HCT116 (cell line): ENCODE measurements at regions of chr2 and their contacts with region 1.

Region 1: DNA sequence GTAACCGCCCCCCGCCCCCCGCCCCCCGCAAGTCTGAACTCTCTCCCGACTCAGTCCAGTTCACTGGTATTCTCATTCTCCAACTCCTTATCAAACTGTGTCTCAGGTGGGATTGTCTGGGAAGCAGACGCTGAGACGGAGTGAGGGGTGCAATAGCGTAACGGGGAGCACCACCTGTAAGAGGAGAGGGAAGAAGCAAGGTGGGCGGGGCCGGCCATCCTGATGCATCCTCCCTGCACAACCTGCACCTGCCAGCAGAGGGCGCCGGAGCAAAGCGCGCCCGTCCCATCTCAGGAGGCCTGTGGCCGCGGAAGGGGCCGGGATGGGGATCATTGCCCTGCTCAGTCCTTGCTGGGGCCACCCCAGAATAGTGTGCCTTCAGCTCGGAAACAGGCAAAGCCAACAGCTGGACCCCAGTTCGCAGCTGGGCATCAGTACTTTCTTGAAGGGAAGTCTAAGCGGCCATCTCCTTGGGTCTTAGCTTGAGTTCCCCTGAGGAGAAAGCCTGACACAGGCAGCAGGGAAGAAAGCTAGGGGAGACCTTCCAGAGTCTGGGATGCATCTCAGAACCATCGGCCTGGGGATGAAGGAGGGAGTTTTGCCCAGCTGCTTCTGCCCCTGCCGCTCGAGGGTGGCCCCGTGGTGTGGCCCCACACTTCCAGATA is 208.0 kb downstream of the TFCP2L1 start:
- DNase-seq: peak; percentile 42
- ATAC-seq: peak; percentile 66
- H3K4me3 ChIP-seq: 0 out of 4 replicates have a peak overlapping the region, but pooled peaks of 1 of the 2 experiments have one; percentile 5
- H3K27ac ChIP-seq: no peak overlapping the region
- H3K4me1 ChIP-seq: peaks cover 5 to 40% of the 10 kb centered on the region in 2 experiments; a peak in 3 of 4 replicates
- H3K27me3 ChIP-seq: no peaks in the 10 kb centered on the region
- CTCF ChIP-seq: peak; percentile 66 to 98 (median 97); a peak in 5 of 6 replicates
- POLR2A ChIP-seq: no peak
- RAD21 ChIP-seq: peak; percentile 44

Region 2: GRCh38 chr2:120686511-120687168 is 390.4 kb before region 1 on chr2:
- CTCF ChIA-PET with region 1: interaction called, 6 read pairs
- POLR2A ChIA-PET with region 1: interaction called, 24 read pairs
- RAD21 ChIA-PET with region 1: no interaction called
- intact Hi-C with region 1: no loop called
- DNase-seq: no peak
- ATAC-seq: peak; percentile 57; the same call in 1 of the 2 replicates
- H3K4me3 ChIP-seq: no peak overlapping the region
- H3K27ac ChIP-seq: no peak overlapping the region
- H3K4me1 ChIP-seq: no peaks in the 10 kb centered on the region
- H3K27me3 ChIP-seq: no peaks in the 10 kb centered on the region
- CTCF ChIP-seq: peak; percentile 28 to 96 (median 82); a peak in 5 of 6 replicates
- POLR2A ChIP-seq: no peak
- RAD21 ChIP-seq: peak; percentile 12; the same call in 1 of the 2 replicates

Region 3: DNA sequence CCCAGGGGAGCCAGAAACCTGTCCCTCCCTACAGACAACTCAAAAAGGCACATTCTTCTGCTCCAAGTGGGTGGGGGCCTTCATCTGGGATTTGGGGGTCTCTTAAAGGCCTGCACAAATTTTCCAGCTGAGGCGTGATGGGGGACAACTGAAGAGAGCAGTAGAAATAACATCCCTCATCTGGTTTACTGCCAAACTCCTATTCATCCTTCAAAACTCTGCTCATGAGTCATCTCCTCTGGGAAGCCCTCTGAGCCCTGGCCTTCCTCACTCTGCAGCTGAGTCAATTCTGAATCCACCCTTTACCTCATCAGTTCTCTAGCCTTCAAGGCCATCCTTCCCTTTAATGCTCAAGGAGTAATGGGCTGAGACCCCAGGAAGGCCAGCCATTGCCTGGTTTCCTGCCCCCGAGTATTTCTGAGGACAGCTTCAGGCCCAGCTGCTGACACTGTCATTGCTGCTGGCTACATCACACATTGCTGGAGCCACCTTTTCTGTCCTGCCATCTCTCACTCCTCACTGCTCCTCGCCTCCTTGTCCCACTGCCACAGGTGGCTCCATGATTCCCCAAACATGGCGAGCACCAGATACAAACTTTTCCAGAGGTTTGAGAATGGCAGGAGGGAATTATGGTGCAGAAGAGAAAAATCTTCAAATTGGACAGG is 373.6 kb before region 1 on chr2:
- CTCF ChIA-PET with region 1: interaction called, 6 read pairs
- POLR2A ChIA-PET with region 1: interaction called, 100 read pairs
- RAD21 ChIA-PET with region 1: no interaction called
- intact Hi-C with region 1: no loop called
- DNase-seq: peak; percentile 59
- ATAC-seq: peak; percentile 87
- H3K4me3 ChIP-seq: no peak overlapping the region
- H3K27ac ChIP-seq: no peak overlapping the region
- H3K4me1 ChIP-seq: peaks cover 16 to 40% of the 10 kb centered on the region in 2 experiments; a peak in 3 of 4 replicates
- H3K27me3 ChIP-seq: no peaks in the 10 kb centered on the region
- CTCF ChIP-seq: no peak
- POLR2A ChIP-seq: no peak
- RAD21 ChIP-seq: no peak

Region 4: DNA sequence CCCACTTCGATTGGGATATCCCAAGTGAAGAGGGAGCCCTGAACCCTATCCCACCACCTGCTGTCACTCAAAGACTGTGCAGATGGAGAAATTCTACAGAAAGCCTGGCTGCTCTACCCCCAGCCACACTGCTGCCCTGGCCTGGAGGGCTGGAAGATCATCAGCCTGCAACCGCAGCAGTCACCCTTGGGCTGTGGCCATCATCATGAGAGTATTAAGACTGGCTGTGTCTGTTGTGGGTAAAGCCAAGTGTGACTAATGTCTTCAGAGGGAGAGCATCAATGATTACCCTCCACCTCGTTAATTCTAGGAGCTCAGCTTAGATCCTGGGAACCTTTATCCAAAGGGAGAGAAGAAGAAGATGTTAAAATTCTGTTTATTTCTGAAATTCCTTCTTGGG is 13.5 kb before region 1 on chr2:
- CTCF ChIA-PET with region 1: no interaction called
- POLR2A ChIA-PET with region 1: interaction called, 10 read pairs
- RAD21 ChIA-PET with region 1: interaction called in 1 of 2 experiments, 5 read pairs
- intact Hi-C with region 1: no loop called
- DNase-seq: no peak
- ATAC-seq: no peak
- H3K4me3 ChIP-seq: no peak overlapping the region
- H3K27ac ChIP-seq: no peak overlapping the region
- H3K4me1 ChIP-seq: no peaks in the 10 kb centered on the region
- H3K27me3 ChIP-seq: no peaks in the 10 kb centered on the region
- CTCF ChIP-seq: no peak
- POLR2A ChIP-seq: no peak
- RAD21 ChIP-seq: no peak

Region 5: DNA sequence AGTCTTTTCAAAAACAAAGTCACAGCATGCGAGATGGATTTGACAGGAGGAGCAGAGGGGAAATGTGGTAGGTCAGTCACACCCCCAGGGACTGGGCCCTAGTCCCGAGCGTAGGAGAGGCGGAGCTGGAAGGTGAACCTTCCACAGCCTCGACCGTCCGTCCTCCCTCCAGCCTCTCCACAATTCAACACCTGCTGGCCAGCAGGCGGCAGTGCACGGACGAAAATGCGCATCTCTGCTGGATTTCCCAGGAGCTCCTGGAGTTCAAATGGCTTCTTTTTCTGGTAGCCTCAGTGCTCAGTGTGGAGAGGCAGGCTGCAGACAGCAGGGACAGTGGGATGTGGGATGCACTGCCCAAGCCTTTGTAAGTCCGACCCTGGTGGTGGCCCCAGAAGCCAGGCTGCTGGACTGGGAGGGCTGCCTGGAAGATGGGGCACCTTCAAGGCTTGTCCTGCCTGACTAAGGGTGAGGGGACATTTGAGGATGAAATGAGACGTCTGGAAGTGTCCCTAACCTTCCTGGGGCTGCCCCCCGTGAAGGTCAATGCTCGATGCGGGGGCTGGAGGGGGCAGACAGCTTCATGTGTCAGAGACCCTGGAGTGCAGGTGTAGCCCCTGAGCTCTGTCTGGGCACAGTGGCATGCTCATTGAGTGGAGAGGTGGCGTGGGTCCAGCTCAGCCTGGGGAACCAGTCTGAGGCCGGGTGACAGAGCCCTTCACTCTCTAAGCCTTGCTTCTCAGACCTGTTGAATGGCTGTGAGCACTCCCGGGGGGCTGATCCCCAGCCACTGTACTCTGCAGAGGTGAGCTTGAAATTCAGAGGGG is 18.5 kb after region 1 on chr2:
- CTCF ChIA-PET with region 1: interaction called, 10 read pairs
- POLR2A ChIA-PET with region 1: interaction called, 21 read pairs
- RAD21 ChIA-PET with region 1: no interaction called
- intact Hi-C with region 1: no loop called
- DNase-seq: peak; percentile 72
- ATAC-seq: peak; percentile 97
- H3K4me3 ChIP-seq: no peak overlapping the region
- H3K27ac ChIP-seq: no peak overlapping the region
- H3K4me1 ChIP-seq: peaks cover 0 to 9% of the 10 kb centered on the region in 2 experiments; a peak in 2 of 4 replicates
- H3K27me3 ChIP-seq: no peaks in the 10 kb centered on the region
- CTCF ChIP-seq: peak; percentile 82 to 87 (median 83)
- POLR2A ChIP-seq: no peak
- RAD21 ChIP-seq: peak; percentile 95

Region 6: DNA sequence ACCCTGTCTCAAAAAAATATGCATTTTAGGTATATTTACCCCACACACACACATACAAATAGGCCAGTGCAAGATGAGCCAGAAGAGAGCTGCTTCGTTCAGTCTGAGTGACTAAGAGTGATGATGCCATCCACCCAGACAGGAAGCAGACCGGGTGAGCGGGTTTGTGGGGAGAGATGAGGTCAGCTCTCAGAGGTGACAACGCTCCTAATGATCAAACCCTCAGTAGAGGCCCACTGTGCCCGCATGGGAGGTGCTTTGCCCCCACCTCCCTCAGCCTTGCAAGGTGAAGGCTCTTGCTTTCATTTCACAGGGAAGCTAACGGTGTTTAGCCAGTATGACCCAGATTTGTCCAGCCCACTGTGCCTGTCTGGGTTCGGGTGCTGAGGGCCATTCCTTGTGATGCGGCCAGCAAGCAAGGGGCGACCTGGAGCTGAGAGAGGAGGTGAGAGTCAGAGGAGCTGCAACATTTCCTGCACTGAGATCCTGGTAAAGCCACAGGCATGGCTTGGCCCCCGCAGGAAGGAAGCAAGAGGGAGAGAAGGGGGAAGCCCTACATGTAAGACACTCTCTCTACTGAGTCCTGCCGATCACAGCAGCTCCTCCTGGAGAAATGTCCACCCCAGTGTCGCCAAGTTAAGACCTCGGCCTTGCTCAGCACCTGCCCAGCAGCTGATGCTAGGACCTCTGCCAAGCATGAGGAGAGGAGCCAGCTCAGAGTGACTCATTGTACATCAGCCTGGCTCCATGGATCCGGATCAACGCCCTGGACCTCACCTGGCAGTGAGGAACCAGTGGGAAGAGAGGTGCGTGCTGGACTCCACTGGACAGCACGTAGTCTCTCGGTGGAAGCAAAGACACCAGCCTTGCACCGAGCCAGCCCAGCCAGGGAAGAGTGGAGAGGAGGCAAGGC is 622.7 kb after region 1 on chr2:
- CTCF ChIA-PET with region 1: no interaction called
- POLR2A ChIA-PET with region 1: interaction called, 11 read pairs
- RAD21 ChIA-PET with region 1: no interaction called
- intact Hi-C with region 1: no loop called
- DNase-seq: peak; percentile 71
- ATAC-seq: peak; percentile 85
- H3K4me3 ChIP-seq: peak overlapping the region; percentile 9 to 51; a peak in 3 of 4 replicates
- H3K27ac ChIP-seq: peak overlapping the region; percentile 7; the same call in 1 of the 2 replicates
- H3K4me1 ChIP-seq: peaks cover 29 to 40% of the 10 kb centered on the region in 2 experiments
- H3K27me3 ChIP-seq: no peaks in the 10 kb centered on the region
- CTCF ChIP-seq: no peak
- POLR2A ChIP-seq: no peak
- RAD21 ChIP-seq: no peak